Adrenal gland (tissue), 19 donors: ENCODE measurements at regions of chr6 and their contacts with region 1.

Region 1: GRCh38 chr6:35146453-35146852 is 5.3 kb upstream of the TCP11 start:
- DNase-seq: peak; percentile 30 to 61 (median 55)
- H3K4me3 ChIP-seq: no peak overlapping the region
- H3K27ac ChIP-seq: no peak overlapping the region
- H3K4me1 ChIP-seq: no peaks in the 10 kb centered on the region
- H3K27me3 ChIP-seq: no peaks in the 10 kb centered on the region
- CTCF ChIP-seq: peak; percentile 35 to 65 (median 54)
- POLR2A ChIP-seq: no peak

Region 2: GRCh38 chr6:35128496-35128895 is 18.0 kb before region 1 on chr6:
- intact Hi-C with region 1: no loop called
- DNase-seq: no peak
- H3K4me3 ChIP-seq: no peak overlapping the region
- H3K27ac ChIP-seq: no peak overlapping the region
- H3K4me1 ChIP-seq: no peaks in the 10 kb centered on the region
- H3K27me3 ChIP-seq: no peaks in the 10 kb centered on the region
- CTCF ChIP-seq: no peak
- POLR2A ChIP-seq: no peak

Region 3: GRCh38 chr6:35202066-35202546 is 55.7 kb after region 1 on chr6:
- intact Hi-C with region 1: loop called (anchors 5 to 10 kb)
- DNase-seq: no peak
- H3K4me3 ChIP-seq: no peak overlapping the region
- H3K27ac ChIP-seq: no peak overlapping the region
- H3K4me1 ChIP-seq: no peaks in the 10 kb centered on the region
- H3K27me3 ChIP-seq: no peaks in the 10 kb centered on the region
- CTCF ChIP-seq: no peak
- POLR2A ChIP-seq: no peak

Region 4: GRCh38 chr6:35240840-35241801 is 94.7 kb after region 1 on chr6:
- intact Hi-C with region 1: loop called (anchors 5 kb)
- DNase-seq: peak; percentile 51 to 86 (median 73)
- H3K4me3 ChIP-seq: no peak overlapping the region
- H3K27ac ChIP-seq: no peak overlapping the region
- H3K4me1 ChIP-seq: no peaks in the 10 kb centered on the region
- H3K27me3 ChIP-seq: no peaks in the 10 kb centered on the region
- CTCF ChIP-seq: peak; percentile 88 to 94 (median 92)
- POLR2A ChIP-seq: no peak

Region 5: GRCh38 chr6:35425284-35425683 is 278.8 kb after region 1 on chr6:
- intact Hi-C with region 1: no loop called
- DNase-seq: no peak
- H3K4me3 ChIP-seq: no peak overlapping the region
- H3K27ac ChIP-seq: no peak overlapping the region
- H3K4me1 ChIP-seq: peaks cover 0 to 3% of the 10 kb centered on the region in 2 donors
- H3K27me3 ChIP-seq: no peaks in the 10 kb centered on the region
- CTCF ChIP-seq: no peak
- POLR2A ChIP-seq: no peak

Region 6: GRCh38 chr6:35439308-35439707 is 292.9 kb after region 1 on chr6:
- intact Hi-C with region 1: no loop called
- DNase-seq: no peak
- H3K4me3 ChIP-seq: no peak overlapping the region
- H3K27ac ChIP-seq: no peak overlapping the region
- H3K4me1 ChIP-seq: no peaks in the 10 kb centered on the region
- H3K27me3 ChIP-seq: no peaks in the 10 kb centered on the region
- CTCF ChIP-seq: no peak
- POLR2A ChIP-seq: no peak